Activated CD8-positive, alpha-beta T cell treated with anti-CD3 and anti-CD28 coated beads, Interleukin-2, amount 10 ng/mL, durations not matched to agents 7 days and 5 days (primary cell): ENCODE measurements at regions of chr1 and their contacts with region 1.

Region 1: DNA sequence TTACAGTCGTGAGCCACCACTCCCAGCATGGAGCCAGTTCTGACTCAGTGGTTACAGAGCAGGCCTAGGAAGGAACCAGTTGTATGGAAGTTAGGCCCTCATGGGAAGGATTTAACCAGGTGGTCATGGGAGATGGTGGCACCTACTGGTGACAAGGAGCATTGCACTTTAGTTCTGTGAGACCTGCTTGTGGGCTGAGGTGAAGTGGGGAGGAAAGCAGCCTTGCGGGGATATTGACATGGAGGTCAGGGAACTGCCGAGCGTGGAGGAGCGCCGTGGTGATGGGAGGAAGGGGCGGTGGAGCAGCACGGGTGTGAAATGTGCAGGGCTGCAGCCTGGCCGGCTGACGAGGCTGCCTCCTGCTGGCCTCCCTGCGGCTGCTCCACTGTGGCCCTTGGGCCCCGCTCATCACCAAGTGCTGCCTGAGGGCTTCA is 100.4 kb downstream of the GALNT2 start:
- DNase-seq: peak; percentile 52
- ATAC-seq: peak; percentile 78
- H3K4me3 Mint-ChIP-seq: no peak overlapping the region
- H3K27ac Mint-ChIP-seq: no peak overlapping the region
- H3K4me1 Mint-ChIP-seq: peaks cover 26% of the 10 kb centered on the region
- H3K27me3 Mint-ChIP-seq: no peaks in the 10 kb centered on the region

Region 2: GRCh38 chr1:230153641-230154296 is 13.7 kb before region 1 on chr1:
- CTCF ChIA-PET with region 1: interaction called, 13 read pairs
- POLR2A ChIA-PET with region 1: no interaction called
- DNase-seq: no peak
- ATAC-seq: no peak
- H3K4me3 Mint-ChIP-seq: no peak overlapping the region
- H3K27ac Mint-ChIP-seq: no peak overlapping the region
- H3K4me1 Mint-ChIP-seq: peaks cover 37% of the 10 kb centered on the region
- H3K27me3 Mint-ChIP-seq: no peaks in the 10 kb centered on the region